CD4-positive, alpha-beta memory T cell (primary cell): ENCODE measurements at regions of chr11 and their contacts with region 1.

Region 1: GRCh38 chr11:73141848-73142286 is 251 bp downstream of the FCHSD2 start:
- DNase-seq: peak in 1 of 5 donors; percentile 78
- H3K4me3 ChIP-seq: peak overlapping the region; percentile 80 to 94
- H3K4me3 Mint-ChIP-seq: peak overlapping the region; percentile 92 to 98 (median 96)
- H3K27ac ChIP-seq: peak overlapping the region; percentile 97
- H3K27ac Mint-ChIP-seq: peak overlapping the region; percentile 84 to 98 (median 95)
- H3K4me1 ChIP-seq: peaks cover 49% of the 10 kb centered on the region
- H3K4me1 Mint-ChIP-seq: peaks cover 30 to 55% (median 39%) of the 10 kb centered on the region in 4 donors
- H3K27me3 ChIP-seq: no peaks in the 10 kb centered on the region
- H3K27me3 Mint-ChIP-seq: no peaks in the 10 kb centered on the region

Region 2: DNA sequence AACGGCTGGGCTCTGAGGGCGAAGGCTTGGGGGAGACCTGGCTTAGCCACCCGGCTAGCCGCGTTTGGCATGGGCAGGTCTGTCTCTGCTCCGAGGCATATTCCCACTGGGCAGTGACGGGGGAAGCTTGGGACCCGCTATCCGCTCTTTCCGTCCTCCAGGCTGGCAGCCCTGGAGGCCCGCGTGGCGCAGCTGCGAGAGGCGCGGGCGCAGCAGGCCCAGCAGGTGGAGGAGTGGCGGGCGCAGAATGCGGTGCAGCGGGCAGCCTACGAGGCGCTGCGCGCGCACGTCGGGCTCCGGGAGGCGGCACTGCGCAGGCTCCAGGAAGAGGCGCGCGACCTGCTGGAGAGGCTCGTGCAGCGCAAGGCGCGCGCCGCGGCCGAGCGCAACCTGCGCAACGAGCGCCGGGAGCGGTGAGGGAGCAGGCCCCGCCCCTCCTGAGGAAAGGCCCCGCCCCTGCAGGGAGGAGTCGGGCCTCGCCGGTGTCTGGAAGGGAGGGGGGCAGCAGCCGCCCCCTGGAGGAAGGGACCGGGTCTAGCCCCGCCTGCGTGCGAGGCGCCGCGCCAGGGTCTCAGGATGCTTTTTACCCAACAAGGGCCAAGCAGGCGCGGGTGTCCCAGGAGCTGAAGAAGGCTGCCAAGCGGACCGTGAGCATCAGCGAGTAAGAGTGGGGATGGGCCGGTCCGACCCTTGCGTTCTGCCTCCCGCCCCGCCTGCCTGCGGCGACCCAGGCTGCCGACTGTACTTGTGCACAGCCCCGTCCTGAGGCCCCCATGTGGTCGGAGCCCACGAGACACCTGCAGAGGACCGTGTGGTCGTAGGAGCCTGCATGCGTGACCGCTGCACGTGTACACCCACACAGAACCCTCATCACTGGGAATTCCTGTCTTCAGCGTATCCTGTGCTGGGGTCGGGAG is 319.7 kb before region 1 on chr11:
- CTCF ChIA-PET with region 1: no interaction called
- POLR2A ChIA-PET with region 1: interaction called, 14 read pairs
- intact Hi-C with region 1: no loop called
- DNase-seq: peak; percentile 81 to 93 (median 86)
- H3K4me3 ChIP-seq: no peak overlapping the region
- H3K4me3 Mint-ChIP-seq: peak overlapping the region in 5 of 8 donors; percentile 8 to 62 (median 31)
- H3K27ac ChIP-seq: peak overlapping the region; percentile 45
- H3K27ac Mint-ChIP-seq: peak overlapping the region in 6 of 7 donors; percentile 17 to 93 (median 68)
- H3K4me1 ChIP-seq: peaks cover 14% of the 10 kb centered on the region
- H3K4me1 Mint-ChIP-seq: peaks cover 17 to 35% (median 22%) of the 10 kb centered on the region in 4 donors
- H3K27me3 ChIP-seq: no peaks in the 10 kb centered on the region
- H3K27me3 Mint-ChIP-seq: no peaks in the 10 kb centered on the region

Region 3: GRCh38 chr11:73001615-73002014 is 140.3 kb before region 1 on chr11:
- CTCF ChIA-PET with region 1: no interaction called
- POLR2A ChIA-PET with region 1: no interaction called
- intact Hi-C with region 1: no loop called
- DNase-seq: no peak
- H3K4me3 ChIP-seq: no peak overlapping the region
- H3K4me3 Mint-ChIP-seq: no peak overlapping the region
- H3K27ac ChIP-seq: no peak overlapping the region
- H3K27ac Mint-ChIP-seq: no peak overlapping the region
- H3K4me1 ChIP-seq: no peaks in the 10 kb centered on the region
- H3K4me1 Mint-ChIP-seq: peaks cover 12 to 23% (median 20%) of the 10 kb centered on the region in 4 donors
- H3K27me3 ChIP-seq: no peaks in the 10 kb centered on the region
- H3K27me3 Mint-ChIP-seq: no peaks in the 10 kb centered on the region

Region 4: GRCh38 chr11:73034777-73035176 is 107.1 kb before region 1 on chr11:
- CTCF ChIA-PET with region 1: interaction called, 5 read pairs
- POLR2A ChIA-PET with region 1: interaction called, 26 read pairs
- intact Hi-C with region 1: loop called (anchors 5 kb)
- DNase-seq: no peak
- H3K4me3 ChIP-seq: peak overlapping the region in 1 of 2 donors; percentile 8
- H3K4me3 Mint-ChIP-seq: peak overlapping the region; percentile 47 to 85 (median 79)
- H3K27ac ChIP-seq: peak overlapping the region; percentile 3
- H3K27ac Mint-ChIP-seq: peak overlapping the region; percentile 72 to 89 (median 85)
- H3K4me1 ChIP-seq: peaks cover 35% of the 10 kb centered on the region
- H3K4me1 Mint-ChIP-seq: peaks cover 32 to 48% (median 40%) of the 10 kb centered on the region in 4 donors
- H3K27me3 ChIP-seq: no peaks in the 10 kb centered on the region
- H3K27me3 Mint-ChIP-seq: no peaks in the 10 kb centered on the region

Region 5: GRCh38 chr11:73157053-73158010 is 15.5 kb after region 1 on chr11:
- CTCF ChIA-PET with region 1: interaction called, 13 read pairs
- POLR2A ChIA-PET with region 1: interaction called, 42 read pairs
- intact Hi-C with region 1: no loop called
- DNase-seq: no peak
- H3K4me3 ChIP-seq: no peak overlapping the region
- H3K4me3 Mint-ChIP-seq: no peak overlapping the region
- H3K27ac ChIP-seq: no peak overlapping the region
- H3K27ac Mint-ChIP-seq: peak overlapping the region in 4 of 7 donors; percentile 12 to 52 (median 43)
- H3K4me1 ChIP-seq: peaks cover 42% of the 10 kb centered on the region
- H3K4me1 Mint-ChIP-seq: peaks cover 30 to 47% (median 39%) of the 10 kb centered on the region in 4 donors
- H3K27me3 ChIP-seq: no peaks in the 10 kb centered on the region
- H3K27me3 Mint-ChIP-seq: no peaks in the 10 kb centered on the region